ENCODE measurements at regions of chr15 and their contacts with region 1.

Region 1: GRCh38 chr15:50051803-50052419 is 67.1 kb downstream of the ATP8B4 start:
- DNase-seq: peak; percentile 32
- H3K4me3 ChIP-seq: no peak overlapping the region
- H3K27ac ChIP-seq: no peak overlapping the region
- H3K4me1 ChIP-seq: no peaks in the 10 kb centered on the region
- H3K27me3 ChIP-seq: no peaks in the 10 kb centered on the region
- CTCF ChIP-seq: peak; percentile 36 to 71 (median 52)
- POLR2A ChIP-seq: no peak

Region 2: GRCh38 chr15:50009634-50010033 is 42.3 kb before region 1 on chr15:
- intact Hi-C with region 1: loop called (anchors 5 kb)
- DNase-seq: no peak
- H3K4me3 ChIP-seq: no peak overlapping the region
- H3K27ac ChIP-seq: no peak overlapping the region
- H3K4me1 ChIP-seq: no peaks in the 10 kb centered on the region
- H3K27me3 ChIP-seq: no peaks in the 10 kb centered on the region
- CTCF ChIP-seq: no peak
- POLR2A ChIP-seq: no peak